ENCODE measurements at regions of chr14 and their contacts with region 1.

Region 1: GRCh38 chr14:100654814-100655740 is 67.9 kb upstream of the BEGAIN start:
- DNase-seq: peak; percentile 62
- H3K4me3 Mint-ChIP-seq: no peak overlapping the region
- H3K27ac Mint-ChIP-seq: no peak overlapping the region
- H3K4me1 Mint-ChIP-seq: no peaks in the 10 kb centered on the region
- H3K27me3 Mint-ChIP-seq: peaks cover 59% of the 10 kb centered on the region

Region 2: DNA sequence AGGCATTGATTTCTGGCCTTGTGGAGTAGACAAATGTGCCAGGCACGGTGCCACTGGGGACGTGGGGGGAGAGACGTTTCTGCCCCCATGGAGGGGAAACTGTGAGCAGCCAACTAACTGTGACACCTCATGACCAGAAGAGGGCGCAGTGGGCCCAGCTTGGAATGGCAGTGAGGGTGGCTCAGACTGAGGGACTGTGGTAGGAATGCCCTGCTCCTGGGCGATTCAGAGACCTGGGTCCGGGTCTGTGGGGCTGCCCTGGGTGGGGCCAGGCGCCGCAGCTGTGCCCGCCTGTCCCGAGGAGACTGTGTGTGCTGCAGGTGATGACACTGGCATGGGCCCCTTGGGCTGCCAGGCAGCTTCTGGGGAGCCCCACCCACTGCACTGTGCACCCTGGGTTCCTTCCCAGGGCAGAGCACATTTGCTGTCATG is 271.3 kb before region 1 on chr14:
- CTCF ChIA-PET with region 1: interaction called, 130 read pairs
- DNase-seq: peak; percentile 76
- H3K4me3 Mint-ChIP-seq: no peak overlapping the region
- H3K27ac Mint-ChIP-seq: no peak overlapping the region
- H3K4me1 Mint-ChIP-seq: peaks cover 19% of the 10 kb centered on the region
- H3K27me3 Mint-ChIP-seq: no peaks in the 10 kb centered on the region

Region 3: DNA sequence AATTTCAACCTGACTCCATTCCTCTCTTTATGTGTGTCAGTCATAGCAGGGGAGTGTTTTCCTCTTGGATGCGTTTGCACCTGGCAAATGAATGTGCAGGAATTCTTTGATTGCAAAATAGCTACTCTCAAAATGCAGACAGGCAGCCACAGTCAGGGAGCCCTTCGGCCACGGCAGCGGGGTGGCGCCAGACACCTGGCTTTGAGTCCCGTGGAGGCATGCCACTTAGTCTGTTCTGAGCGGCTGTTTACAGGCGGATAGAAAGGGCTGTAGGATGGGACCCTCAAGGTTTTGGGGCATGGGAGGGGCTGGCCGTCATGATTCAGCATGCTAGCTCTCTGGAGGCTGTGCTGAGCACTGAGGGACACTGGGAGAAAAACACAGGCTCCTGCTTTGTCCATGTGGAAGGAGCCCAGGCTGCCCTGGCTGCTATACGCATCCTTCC is 214.9 kb before region 1 on chr14:
- CTCF ChIA-PET with region 1: interaction called, 17 read pairs
- DNase-seq: peak; percentile 57
- H3K4me3 Mint-ChIP-seq: no peak overlapping the region
- H3K27ac Mint-ChIP-seq: no peak overlapping the region
- H3K4me1 Mint-ChIP-seq: peaks cover 18% of the 10 kb centered on the region
- H3K27me3 Mint-ChIP-seq: no peaks in the 10 kb centered on the region

Region 4: DNA sequence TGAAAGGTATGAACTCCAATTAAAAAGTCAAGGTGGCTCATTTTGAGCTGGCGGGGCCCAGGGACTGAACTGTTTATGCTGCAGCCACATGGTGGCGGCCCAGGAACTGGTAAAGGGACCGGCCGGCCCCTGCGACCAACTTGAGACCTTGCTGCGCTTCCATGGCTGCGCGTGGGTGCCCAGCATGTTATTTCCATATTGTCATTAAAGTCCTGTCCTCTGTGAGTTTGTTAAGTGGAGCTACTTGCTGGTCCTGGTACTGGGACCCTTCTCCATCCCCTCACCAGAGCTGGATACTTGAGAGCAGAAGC is 130.2 kb before region 1 on chr14:
- CTCF ChIA-PET with region 1: interaction called, 40 read pairs
- DNase-seq: peak; percentile 47
- H3K4me3 Mint-ChIP-seq: no peak overlapping the region
- H3K27ac Mint-ChIP-seq: no peak overlapping the region
- H3K4me1 Mint-ChIP-seq: no peaks in the 10 kb centered on the region
- H3K27me3 Mint-ChIP-seq: no peaks in the 10 kb centered on the region

Region 5: DNA sequence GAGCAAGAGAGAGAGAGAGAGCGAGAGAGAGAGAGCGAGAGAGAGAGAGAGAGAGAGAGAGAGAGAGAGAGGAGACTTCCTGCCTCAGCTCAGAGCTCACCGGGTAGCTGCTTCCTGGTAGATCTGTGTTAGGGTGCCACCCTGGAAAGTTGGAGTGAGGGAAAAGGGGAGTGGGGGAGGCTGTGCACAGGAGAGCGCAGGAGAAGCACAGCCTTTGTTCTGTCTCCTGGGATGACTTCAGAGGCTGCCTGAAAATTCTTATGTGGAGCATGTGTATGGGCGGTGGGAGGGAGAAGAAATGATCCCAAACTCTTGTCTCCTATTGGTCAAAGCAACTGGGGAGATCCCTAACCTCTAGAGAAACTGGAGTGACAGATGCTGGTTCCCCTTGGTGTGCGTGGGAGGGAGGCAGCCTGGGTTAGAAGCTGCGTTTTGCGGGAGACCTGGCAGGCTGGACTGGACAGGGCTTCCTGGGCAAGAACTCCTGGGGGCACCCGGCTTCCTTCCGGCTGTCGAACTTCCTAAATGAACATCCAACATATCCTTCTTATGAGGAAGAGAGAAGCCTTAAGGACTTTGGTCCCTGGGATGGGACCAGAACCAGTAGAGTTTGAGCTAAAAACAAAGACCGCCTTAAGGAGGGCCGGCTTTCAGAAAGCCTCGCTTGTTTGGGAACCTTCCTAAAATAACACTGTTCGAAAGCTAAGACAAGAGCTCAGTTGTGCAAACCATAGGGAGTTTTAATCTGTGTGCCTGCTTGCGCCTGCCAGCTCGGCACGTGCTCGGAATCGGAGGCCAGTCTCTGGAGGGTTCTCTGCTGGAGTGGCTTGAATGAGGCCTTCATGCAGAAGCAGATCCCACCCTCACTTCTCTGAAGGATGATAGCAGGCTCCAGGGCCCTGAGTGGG is 37.4 kb before region 1 on chr14:
- CTCF ChIA-PET with region 1: interaction called, 13 read pairs
- DNase-seq: peak; percentile 41
- H3K4me3 Mint-ChIP-seq: peak overlapping the region; percentile 5
- H3K27ac Mint-ChIP-seq: peak overlapping the region; percentile 38
- H3K4me1 Mint-ChIP-seq: peaks cover 16% of the 10 kb centered on the region
- H3K27me3 Mint-ChIP-seq: peaks cover 76% of the 10 kb centered on the region